Mammary epithelial cell (primary cell): ENCODE measurements at regions of chr1 and their contacts with region 1.

Region 1: DNA sequence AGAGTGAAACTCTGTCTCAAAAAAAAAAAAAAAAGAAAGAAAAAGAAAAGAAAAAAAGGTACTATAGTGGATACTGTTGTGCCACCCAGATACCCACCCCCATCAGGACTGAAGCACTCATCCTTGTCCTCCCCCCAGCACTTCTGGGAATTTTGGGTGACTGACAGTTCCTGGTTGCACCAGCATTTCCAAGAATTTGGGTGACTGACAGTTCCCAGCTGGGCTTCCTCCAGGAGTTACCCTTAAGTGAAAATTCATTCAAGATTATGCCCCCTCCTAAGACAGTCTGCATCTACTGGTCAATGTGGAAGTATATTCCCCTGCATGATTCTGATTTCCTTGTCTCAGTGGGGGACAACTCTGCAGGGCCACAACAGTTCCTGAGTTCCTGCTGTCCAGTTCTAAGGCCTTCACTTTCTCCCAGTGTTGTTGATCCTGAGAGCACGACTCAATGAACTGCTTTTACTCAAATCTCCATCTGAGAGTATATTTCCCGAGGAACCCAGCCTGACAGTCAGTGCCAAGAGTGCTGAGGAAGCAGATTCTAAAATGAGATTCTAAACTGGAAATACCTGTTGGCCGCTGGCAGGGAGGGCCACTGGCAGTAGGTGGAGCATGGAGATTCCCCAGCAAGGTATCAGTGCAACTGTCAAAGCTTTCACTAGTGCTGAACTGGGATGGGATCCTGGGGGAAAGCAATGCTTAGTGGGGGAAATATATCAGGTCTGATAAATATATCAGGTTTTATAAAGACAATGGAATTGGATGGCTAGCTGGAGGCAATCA is 18.5 kb downstream of the RIIAD1 start:
- DNase-seq: peak; percentile 72
- H3K4me3 ChIP-seq: no peak overlapping the region
- H3K27ac ChIP-seq: no peak overlapping the region
- H3K4me1 ChIP-seq: peaks cover 5% of the 10 kb centered on the region
- H3K27me3 ChIP-seq: no peaks in the 10 kb centered on the region
- CTCF ChIP-seq: peak in 1 of 2 donors; percentile 41

Region 2: DNA sequence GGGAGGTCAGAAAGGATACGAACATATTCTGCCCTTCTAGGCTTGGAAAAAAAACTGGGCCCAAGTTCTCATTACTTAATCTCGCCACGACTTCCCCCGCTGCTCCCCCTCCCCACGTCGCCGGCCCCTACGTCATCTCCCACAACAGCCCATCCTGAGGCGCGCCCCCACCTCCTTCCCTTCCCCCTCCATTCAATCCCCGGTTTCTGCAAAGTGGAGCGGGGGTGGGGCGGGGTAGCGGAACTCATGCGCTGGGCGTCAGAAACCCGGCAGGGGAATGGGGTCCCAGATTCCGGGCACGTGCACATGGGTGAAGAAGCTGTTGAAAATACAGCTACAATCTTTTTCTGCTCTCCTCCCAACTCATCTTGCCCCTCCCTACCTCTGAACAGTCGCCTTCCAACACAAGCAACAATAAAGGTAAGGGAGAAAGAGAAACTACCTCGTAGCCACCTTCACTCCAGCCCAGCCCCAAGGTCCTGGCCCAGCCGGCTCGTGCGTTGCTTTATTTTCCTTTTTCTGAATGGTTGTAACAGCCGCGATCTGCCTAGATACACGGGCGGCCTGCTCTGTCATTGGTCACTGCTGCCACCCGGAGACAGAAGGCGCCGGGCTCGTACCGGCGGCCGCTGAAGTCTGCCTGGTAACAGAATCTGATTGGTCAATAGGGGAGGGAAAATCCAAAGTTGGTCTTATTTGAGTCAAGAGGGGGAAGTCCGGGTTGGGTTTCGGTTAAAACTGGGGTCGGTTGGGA is 392.8 kb before region 1 on chr1 and contains the start of gene RFX5:
- CTCF ChIA-PET with region 1: no interaction called
- dilution Hi-C with region 1: no loop called
- in situ Hi-C with region 1: no loop called
- intact Hi-C with region 1: loop called (anchors 2 kb)
- DNase-seq: peak; percentile 99
- H3K4me3 ChIP-seq: peak within 1 kb of the TSS; percentile 60 to 93 (median 78)
- H3K27ac ChIP-seq: peak within 1 kb of the TSS; percentile 100
- H3K4me1 ChIP-seq: peaks cover 15% of the 10 kb centered on the region
- H3K27me3 ChIP-seq: no peaks in the 10 kb centered on the region
- CTCF ChIP-seq: no peak
- total RNA-seq, gene RFX5: 45.5 to 45.9 TPM

Region 3: DNA sequence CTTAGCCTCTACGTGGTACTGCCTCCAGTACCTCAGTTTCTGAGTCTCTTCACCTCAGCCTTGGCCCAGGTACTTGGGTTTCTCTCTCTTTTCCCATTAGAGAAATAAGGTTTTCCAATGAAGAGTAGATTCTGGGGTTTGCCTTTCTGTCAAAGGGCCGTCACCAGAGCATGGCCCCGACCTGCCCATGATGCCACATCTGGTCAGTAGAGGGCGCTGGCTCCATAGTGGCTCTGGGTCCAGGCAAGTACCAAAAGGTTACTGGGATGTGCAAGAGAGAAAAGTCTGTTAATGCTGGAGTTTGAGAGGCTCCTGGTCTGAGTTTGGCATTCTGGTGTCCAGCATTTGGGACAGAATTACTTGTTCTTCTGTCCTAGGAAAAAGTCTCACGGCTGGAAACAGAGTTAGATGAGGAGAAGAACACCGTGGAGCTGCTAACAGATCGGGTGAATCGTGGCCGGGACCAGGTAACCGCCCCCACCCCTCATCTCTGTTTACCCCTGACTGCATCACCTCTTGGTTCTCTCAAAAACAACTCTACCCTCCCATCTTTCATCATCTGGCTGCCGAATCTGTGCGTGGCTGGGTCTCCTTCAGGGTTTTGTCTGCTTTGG is 205.0 kb before region 1 on chr1:
- CTCF ChIA-PET with region 1: no interaction called
- dilution Hi-C with region 1: no loop called
- in situ Hi-C with region 1: no loop called
- intact Hi-C with region 1: loop called (anchors 1 kb)
- DNase-seq: peak; percentile 57
- H3K4me3 ChIP-seq: no peak overlapping the region
- H3K27ac ChIP-seq: no peak overlapping the region
- H3K4me1 ChIP-seq: peaks cover 16% of the 10 kb centered on the region
- H3K27me3 ChIP-seq: no peaks in the 10 kb centered on the region
- CTCF ChIP-seq: peak; percentile 95 to 98

Region 4: GRCh38 chr1:151693076-151693651 is 46.6 kb before region 1 on chr1:
- CTCF ChIA-PET with region 1: no interaction called
- dilution Hi-C with region 1: no loop called
- in situ Hi-C with region 1: no loop called
- intact Hi-C with region 1: loop called (anchors 1 kb)
- DNase-seq: peak; percentile 26
- H3K4me3 ChIP-seq: no peak overlapping the region
- H3K27ac ChIP-seq: no peak overlapping the region
- H3K4me1 ChIP-seq: no peaks in the 10 kb centered on the region
- H3K27me3 ChIP-seq: no peaks in the 10 kb centered on the region
- CTCF ChIP-seq: peak; percentile 72 to 79

Region 5: DNA sequence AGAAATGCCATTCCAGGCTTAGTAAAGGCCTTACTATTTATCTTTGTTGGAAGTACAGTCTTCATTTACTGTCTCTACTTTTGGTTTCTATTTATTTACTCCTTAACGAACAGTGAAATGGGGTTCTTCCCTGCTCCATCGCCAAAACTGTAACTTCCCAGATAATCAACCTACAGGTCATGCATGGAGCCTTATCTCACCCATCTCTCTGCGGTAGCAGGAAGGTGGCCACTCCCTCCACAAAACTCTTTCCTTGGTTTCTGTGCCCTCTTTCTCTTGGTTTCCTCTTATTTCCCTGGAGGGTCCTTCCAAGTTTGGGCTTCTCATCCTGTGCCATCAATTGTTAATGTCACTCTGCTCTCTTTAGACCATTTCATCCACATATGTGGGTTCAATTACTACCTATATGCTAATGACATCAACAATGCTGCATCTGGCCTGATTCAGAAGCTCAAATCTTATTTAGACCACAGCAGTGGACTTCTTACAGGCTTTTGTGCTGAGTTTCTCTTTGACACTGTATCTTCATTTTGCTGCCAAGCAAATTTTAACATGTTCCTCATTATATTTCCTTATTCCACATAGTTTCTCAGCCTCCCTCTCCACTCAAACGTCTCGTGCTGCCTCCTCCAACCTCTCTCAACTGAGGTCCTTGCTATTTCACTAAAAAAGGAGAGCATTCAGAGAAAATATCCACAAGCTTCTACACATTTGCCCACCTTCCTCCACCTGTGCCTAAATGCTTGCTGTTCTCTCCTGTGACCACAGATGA is 43.8 kb after region 1 on chr1:
- CTCF ChIA-PET with region 1: no interaction called
- dilution Hi-C with region 1: no loop called
- in situ Hi-C with region 1: no loop called
- intact Hi-C with region 1: no loop called
- DNase-seq: no peak
- H3K4me3 ChIP-seq: no peak overlapping the region
- H3K27ac ChIP-seq: no peak overlapping the region
- H3K4me1 ChIP-seq: no peaks in the 10 kb centered on the region
- H3K27me3 ChIP-seq: no peaks in the 10 kb centered on the region
- CTCF ChIP-seq: no peak